Posterior vena cava (tissue), 2 donors: ENCODE measurements at regions of chr6 and their contacts with region 1.

Region 1: DNA sequence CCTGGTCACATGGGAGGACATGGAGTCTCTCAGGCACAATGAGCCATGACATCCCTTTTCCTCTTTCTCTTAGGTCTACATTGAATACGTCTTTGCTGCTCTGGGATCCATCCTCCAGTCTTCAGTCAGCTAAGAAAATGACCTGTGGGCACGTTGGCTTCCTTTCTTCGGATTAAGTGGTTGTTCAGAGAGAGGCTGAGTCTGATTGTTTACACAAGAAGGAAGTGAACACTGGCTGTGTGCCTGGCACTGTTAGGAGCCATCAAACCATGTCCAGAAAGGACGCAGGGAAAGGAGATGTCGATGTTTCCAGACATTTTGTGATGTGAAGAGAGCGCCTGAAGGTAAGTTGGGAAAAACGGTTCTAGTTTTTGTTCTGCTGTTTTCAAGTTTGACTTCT is 309.9 kb upstream of the CDYL start:
- DNase-seq: no peak

Region 2: GRCh38 chr6:4672781-4673180 is 206.5 kb after region 1 on chr6:
- intact Hi-C with region 1: loop called in 1 of 2 experiments (anchors 5 kb)
- DNase-seq: no peak